Activated CD8-positive, alpha-beta T cell treated with anti-CD3 and anti-CD28 coated beads, Interleukin-2, amount 10 ng/mL, durations not matched to agents 7 days and 5 days (primary cell): ENCODE measurements at regions of chr3 and their contacts with region 1.

Region 1: DNA sequence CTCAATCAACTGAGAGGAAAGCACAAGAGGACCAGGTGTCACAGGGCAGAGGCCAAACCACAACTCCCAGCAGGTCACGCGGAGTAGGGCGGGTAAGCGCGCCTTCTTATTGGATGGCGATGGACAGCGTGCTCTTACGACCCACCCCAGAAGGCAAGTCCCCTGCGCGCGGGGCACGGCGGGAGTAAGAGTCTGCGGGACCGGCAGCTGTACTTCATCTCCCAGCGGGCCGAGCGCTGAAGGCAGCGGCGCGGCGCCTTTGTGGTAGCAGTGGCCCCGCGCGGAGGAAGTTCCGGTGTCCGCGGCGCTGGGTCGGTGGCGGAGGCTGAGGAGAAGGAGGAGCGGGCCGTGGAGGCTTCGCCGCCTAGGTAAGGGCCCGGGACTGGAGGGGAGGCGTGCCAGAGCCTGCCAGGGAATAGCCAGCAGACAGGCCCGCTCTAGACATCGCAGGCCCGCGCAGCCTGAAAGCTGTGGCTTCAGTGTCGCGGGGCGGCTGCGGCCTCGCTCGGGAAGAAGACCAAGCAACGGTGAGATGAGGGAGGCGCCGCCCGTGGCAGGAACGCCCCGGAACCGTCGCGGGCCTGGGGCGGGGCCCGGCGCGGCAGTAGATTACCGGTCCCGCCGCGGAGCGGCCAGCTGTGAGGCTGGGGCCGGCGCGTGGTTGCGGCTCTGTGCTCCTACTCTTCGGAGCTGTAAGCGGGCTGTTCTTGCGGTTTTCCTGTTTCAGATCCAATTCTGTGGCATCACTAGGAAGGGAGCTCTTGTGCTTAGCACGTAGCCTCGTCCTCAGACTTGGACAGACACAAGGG is at the start of gene RBM6:
- DNase-seq: peak; percentile 98
- ATAC-seq: peak; percentile 97
- H3K4me3 Mint-ChIP-seq: peak within 1 kb of the TSS; percentile 99
- H3K27ac Mint-ChIP-seq: peak within 1 kb of the TSS; percentile 98
- H3K4me1 Mint-ChIP-seq: peaks cover 27% of the 10 kb centered on the region
- H3K27me3 Mint-ChIP-seq: no peaks in the 10 kb centered on the region
- total RNA-seq, gene RBM6: 104 to 112 TPM

Region 2: GRCh38 chr3:49867871-49868321 is 72.2 kb before region 1 on chr3:
- CTCF ChIA-PET with region 1: no interaction called
- POLR2A ChIA-PET with region 1: no interaction called
- DNase-seq: peak; percentile 67
- ATAC-seq: peak; percentile 43
- H3K4me3 Mint-ChIP-seq: no peak overlapping the region
- H3K27ac Mint-ChIP-seq: no peak overlapping the region
- H3K4me1 Mint-ChIP-seq: no peaks in the 10 kb centered on the region
- H3K27me3 Mint-ChIP-seq: peaks cover 40% of the 10 kb centered on the region

Region 3: DNA sequence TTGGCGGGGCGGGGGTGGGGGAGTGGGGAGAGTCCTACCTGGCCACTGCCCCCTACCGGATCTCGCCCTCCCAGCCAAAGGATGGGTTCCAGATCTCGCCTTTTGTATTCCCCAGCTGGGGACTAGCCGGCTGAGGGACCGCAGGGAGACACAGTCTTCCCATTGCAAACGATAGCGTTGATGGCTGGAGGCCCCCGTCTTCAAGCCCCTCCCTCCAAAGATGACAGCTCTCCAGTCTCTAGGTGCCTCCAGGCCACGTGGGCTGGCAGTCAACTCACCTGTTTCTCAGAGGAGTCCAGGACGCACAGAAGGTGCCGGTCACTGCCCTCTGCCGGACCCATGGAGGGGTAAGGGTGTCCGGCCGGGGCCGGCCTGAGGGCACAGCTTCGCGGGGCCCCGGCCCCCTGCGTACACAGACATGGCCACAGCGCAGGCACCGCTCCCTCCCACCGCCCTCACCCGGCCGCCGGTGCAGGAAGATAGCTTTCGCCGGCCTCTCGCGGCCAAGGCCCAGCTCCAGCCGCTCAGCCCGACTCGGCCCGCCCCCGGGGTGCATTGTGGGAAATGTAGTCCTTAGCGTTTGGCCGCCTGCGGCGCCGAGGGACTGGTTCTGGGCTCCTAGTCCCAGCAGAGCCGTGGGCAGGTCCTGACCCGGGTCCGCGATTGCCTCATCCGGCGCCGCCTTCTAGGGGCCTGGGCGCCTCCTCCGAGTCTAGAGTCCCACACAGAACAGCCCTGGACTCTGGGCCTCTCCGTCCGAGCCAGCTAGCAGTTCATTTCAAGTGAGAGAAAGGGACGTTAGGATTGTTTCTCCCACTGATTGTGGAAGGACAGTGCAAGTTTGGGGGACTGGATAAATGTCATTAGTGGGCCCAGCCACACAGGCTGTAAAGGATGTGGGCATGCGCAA is 10.5 kb before region 1 on chr3 and contains the start of gene MON1A:
- CTCF ChIA-PET with region 1: interaction called, 19 read pairs
- POLR2A ChIA-PET with region 1: interaction called, 24 read pairs
- DNase-seq: peak; percentile 89
- ATAC-seq: peak; percentile 98
- H3K4me3 Mint-ChIP-seq: peak within 1 kb of the TSS; percentile 80
- H3K27ac Mint-ChIP-seq: peak within 1 kb of the TSS; percentile 81
- H3K4me1 Mint-ChIP-seq: peaks cover 26% of the 10 kb centered on the region
- H3K27me3 Mint-ChIP-seq: no peaks in the 10 kb centered on the region
- total RNA-seq, gene MON1A: 13.4 to 15.0 TPM

Region 4: DNA sequence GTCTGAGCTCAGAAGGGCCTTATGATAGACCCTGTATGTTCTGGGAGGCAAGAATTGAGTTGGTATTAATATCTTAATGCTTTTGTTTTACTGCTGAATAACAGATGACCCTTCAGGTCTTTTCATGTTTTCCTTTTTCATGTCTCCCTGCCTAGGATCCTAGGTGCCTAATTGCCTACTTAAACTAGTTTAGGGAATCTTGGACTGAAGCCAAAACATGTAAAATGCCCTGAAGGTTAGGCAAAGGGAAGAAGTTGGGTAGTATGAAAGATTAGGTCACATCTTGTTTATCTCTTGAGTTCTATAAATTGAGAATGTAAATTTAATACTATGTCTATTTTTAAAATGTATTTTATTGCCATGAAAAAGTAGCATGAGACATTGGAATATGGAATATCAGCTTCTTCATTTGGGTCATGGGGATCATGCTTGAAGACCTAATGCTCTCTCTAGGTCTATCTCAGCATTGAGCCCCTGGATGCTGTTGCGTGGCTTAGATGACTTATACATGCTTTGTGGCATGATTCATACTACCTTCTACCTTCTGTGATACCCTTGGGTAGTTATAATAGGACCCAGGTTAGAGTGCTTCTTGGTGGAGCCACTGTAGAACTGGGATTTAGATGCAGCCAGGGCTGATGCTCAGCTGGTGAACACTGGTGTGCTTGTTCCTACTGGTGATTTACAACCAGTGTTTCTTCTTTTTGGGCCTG is 26.3 kb after region 1 on chr3:
- CTCF ChIA-PET with region 1: no interaction called
- POLR2A ChIA-PET with region 1: no interaction called
- DNase-seq: no peak
- ATAC-seq: no peak
- H3K4me3 Mint-ChIP-seq: no peak overlapping the region
- H3K27ac Mint-ChIP-seq: no peak overlapping the region
- H3K4me1 Mint-ChIP-seq: no peaks in the 10 kb centered on the region
- H3K27me3 Mint-ChIP-seq: no peaks in the 10 kb centered on the region